PC-9 (cell line): ENCODE measurements at regions of chr3 and their contacts with region 1.

Region 1: GRCh38 chr3:157360044-157360443 is 76.6 kb upstream of the PTX3 start:
- DNase-seq: peak; percentile 32 to 95
- H3K4me3 ChIP-seq: no peak overlapping the region
- H3K27ac ChIP-seq: peak overlapping the region; percentile 92
- H3K4me1 ChIP-seq: peaks cover 29% of the 10 kb centered on the region
- H3K27me3 ChIP-seq: no peaks in the 10 kb centered on the region
- CTCF ChIP-seq: no peak

Region 2: GRCh38 chr3:157436583-157437291 is 76.7 kb after region 1 on chr3 and contains the start of gene PTX3:
- CTCF ChIA-PET with region 1: no interaction called
- POLR2A ChIA-PET with region 1: no interaction called
- intact Hi-C with region 1: loop called (anchors 2 kb)
- DNase-seq: peak; percentile 22 to 81
- H3K4me3 ChIP-seq: peak within 1 kb of the TSS; percentile 91
- H3K27ac ChIP-seq: peak within 1 kb of the TSS; percentile 63
- H3K4me1 ChIP-seq: peaks cover 25% of the 10 kb centered on the region
- H3K27me3 ChIP-seq: no peaks in the 10 kb centered on the region
- CTCF ChIP-seq: no peak
- total RNA-seq, gene PTX3: 0.59 and 1.1 TPM in 2 replicates